H1 (cell line): ENCODE measurements at regions of chr2 and their contacts with region 1.

Region 1: DNA sequence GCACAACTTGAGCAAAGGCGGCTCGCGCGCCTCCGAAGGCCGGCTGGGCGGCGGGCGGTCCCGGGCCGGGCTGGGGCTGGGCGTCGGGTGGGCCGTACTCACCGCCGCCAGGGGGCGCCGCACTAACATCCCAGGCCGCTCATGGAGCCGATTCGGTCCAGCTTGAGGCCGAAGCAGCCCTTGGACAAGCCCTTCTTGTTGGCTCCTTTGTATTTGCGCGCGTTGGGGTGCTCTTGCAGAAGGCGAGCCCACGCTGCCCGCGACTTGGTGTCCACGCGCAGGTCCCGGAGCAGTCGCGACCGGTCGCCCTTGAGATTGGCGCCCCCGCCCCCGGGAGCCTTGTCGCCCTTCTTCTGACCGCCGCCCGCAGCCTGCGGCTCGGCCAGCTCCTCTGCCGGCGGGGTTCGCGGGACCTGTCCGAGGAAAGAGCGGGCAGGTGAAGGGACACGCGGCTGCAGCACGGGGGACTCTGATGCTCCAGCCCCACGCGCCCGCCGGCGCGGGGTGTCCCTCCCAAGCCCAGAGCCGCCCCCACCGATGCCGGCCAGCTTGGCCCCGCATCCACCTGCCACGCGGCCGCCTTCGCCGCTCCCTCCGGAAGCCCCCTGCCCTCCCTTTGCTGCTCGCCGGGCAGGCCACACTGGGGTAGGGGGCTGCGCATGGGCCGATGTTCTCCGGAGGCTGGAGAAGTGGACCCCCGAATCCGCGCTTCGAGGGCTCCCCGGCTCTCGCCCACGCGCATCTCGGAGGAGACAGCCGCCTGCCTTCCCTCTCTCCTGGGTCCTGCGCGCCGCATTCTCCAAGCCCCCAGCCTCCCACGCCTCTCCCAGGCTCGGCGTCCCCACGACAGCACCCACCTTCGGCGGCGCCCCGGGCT is 655 bp downstream of the NPPC start:
- DNase-seq: peak; percentile 59 to 93
- H3K4me3 ChIP-seq: peak overlapping the region; percentile 52 to 75 (median 66)
- H3K27ac ChIP-seq: no peak overlapping the region
- H3K4me1 ChIP-seq: peaks cover 3 to 20% (median 14%) of the 10 kb centered on the region in 4 experiments
- H3K27me3 ChIP-seq: peaks cover 24 to 55% (median 43%) of the 10 kb centered on the region in 4 experiments
- CTCF ChIP-seq: peak in 2 of 3 experiments; percentile 80 to 89; a peak in 3 of 4 replicates
- EP300 ChIP-seq: no peak
- POLR2A ChIP-seq: no peak
- RAD21 ChIP-seq: peak; percentile 56 to 73

Region 2: GRCh38 chr2:231696007-231696371 is 229.6 kb before region 1 on chr2:
- CTCF ChIA-PET with region 1: no interaction called
- POLR2A ChIA-PET with region 1: no interaction called
- DNase-seq: no peak
- H3K4me3 ChIP-seq: no peak overlapping the region
- H3K27ac ChIP-seq: no peak overlapping the region
- H3K4me1 ChIP-seq: peaks cover 0 to 3% (median 1%) of the 10 kb centered on the region in 4 experiments; a peak in 1 of 7 replicates
- H3K27me3 ChIP-seq: no peaks in the 10 kb centered on the region
- CTCF ChIP-seq: no peak
- EP300 ChIP-seq: no peak
- POLR2A ChIP-seq: no peak
- RAD21 ChIP-seq: no peak

Region 3: DNA sequence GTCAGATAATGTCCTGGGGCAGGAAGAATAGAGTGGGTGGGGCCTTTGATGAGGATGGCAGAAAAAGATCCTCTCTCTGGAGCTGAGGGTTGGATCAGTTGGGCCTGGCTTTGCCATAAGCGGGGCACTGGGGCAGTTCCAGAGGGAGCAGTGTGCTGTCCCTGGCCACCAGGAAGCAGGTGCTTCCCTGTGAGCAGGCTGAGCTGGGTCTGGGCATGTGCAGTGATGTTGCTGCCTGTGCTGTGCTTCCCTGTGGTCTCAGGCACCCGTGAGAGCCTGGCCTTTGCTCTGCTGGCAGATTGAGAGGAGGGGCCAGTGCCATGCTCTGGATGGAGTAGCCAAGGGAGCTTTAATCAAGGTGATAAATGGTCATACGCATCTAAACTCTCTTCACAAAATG is 15.3 kb after region 1 on chr2:
- CTCF ChIA-PET with region 1: interaction called, 24 read pairs
- POLR2A ChIA-PET with region 1: interaction called, 10 read pairs
- DNase-seq: no peak
- H3K4me3 ChIP-seq: no peak overlapping the region
- H3K27ac ChIP-seq: no peak overlapping the region
- H3K4me1 ChIP-seq: no peaks in the 10 kb centered on the region
- H3K27me3 ChIP-seq: no peaks in the 10 kb centered on the region
- CTCF ChIP-seq: no peak
- EP300 ChIP-seq: no peak
- POLR2A ChIP-seq: no peak
- RAD21 ChIP-seq: no peak

Region 4: DNA sequence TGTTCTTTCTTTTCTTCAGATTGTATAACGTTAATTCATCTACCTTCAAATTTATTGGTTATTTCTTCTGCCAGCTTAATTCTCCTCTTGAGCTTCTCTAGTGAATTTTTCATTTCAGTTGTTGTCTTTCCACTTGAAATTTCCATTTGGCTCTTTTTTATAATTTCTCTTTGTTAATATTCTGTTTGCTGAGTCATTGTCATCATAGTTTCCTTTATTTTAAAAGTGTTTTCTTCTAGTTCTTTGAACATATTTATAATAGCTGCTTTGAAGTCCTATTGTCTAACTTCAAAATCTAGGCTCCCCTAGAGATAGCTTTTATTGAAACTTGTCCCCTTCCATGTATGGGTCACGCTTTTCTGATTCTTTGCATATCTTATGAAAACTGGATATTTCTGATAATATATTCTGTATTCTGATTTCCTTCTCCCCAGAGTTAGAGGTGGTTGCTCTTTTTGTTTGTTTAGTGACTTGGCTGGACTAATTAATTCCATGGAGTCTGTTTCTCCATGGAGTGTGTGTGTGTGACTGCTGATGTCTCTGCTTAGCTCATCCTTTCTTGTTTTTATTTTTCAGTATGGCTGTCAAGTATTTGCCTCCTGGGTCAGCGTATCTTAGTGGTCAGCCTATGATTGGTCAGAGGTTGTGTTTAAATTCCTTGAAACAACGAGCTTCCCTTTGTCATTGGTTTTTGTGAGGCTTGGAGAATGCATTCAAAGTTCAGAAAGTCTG is 83.5 kb after region 1 on chr2:
- CTCF ChIA-PET with region 1: interaction called, 11 read pairs
- POLR2A ChIA-PET with region 1: no interaction called
- DNase-seq: no peak
- H3K4me3 ChIP-seq: no peak overlapping the region
- H3K27ac ChIP-seq: no peak overlapping the region
- H3K4me1 ChIP-seq: peaks cover 0 to 8% (median under 1%) of the 10 kb centered on the region in 4 experiments; a peak in 2 of 7 replicates
- H3K27me3 ChIP-seq: no peaks in the 10 kb centered on the region
- CTCF ChIP-seq: no peak
- EP300 ChIP-seq: no peak
- POLR2A ChIP-seq: no peak
- RAD21 ChIP-seq: no peak

Region 5: GRCh38 chr2:232120911-232121310 is 195.4 kb after region 1 on chr2:
- CTCF ChIA-PET with region 1: interaction called, 12 read pairs
- POLR2A ChIA-PET with region 1: no interaction called
- DNase-seq: no peak
- H3K4me3 ChIP-seq: no peak overlapping the region
- H3K27ac ChIP-seq: no peak overlapping the region
- H3K4me1 ChIP-seq: 0 out of 7 replicates have a peak, but pooled peaks cover 0 to 2% (median 0%) of the 10 kb centered on the region in 4 experiments
- H3K27me3 ChIP-seq: no peaks in the 10 kb centered on the region
- CTCF ChIP-seq: no peak
- EP300 ChIP-seq: no peak
- POLR2A ChIP-seq: no peak
- RAD21 ChIP-seq: no peak

Region 6: DNA sequence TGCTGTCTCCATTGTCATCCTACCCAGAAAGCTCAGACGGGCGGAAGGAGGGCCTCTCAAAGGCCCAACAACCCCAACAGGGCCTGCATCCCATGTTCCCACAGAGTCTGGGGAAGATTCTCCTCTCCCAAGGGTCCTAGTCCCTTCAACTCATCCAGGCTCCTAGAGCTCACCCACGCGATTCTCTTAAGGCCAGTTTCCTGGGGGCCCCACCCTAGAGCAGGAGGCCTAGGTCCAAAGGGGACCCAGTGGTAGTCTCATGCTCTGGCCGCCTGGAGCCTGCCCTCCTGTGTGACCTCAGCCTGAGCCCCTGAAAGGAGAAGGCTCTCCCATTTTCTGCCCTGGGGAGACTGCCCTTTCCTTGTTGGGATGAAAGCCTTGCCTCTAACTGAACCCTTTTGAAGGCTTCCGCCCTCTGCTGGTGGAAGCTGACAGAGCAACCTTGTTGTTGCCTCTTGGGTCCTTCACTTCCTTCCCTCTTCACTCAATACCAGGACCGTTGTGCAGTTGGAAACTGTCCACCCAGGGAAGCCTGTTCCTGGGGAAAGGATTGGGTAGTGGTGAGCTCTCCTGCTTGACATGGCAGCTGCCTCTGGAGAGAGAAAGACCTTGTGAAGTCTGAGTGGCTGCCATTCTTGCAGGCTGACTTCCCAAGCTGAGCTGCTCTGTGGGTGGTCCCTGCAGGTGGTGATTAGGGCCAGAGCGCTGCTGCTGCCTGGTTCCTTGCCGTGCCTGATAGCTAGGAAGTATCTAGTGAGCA is 367.0 kb after region 1 on chr2:
- CTCF ChIA-PET with region 1: interaction called, 10 read pairs
- POLR2A ChIA-PET with region 1: no interaction called
- DNase-seq: peak; percentile 46 to 89
- H3K4me3 ChIP-seq: no peak overlapping the region
- H3K27ac ChIP-seq: no peak overlapping the region
- H3K4me1 ChIP-seq: peaks cover 2 to 5% (median 3%) of the 10 kb centered on the region in 4 experiments; a peak in 5 of 7 replicates
- H3K27me3 ChIP-seq: no peaks in the 10 kb centered on the region
- CTCF ChIP-seq: peak; percentile 72 to 95 (median 77)
- EP300 ChIP-seq: no peak
- POLR2A ChIP-seq: no peak
- RAD21 ChIP-seq: peak; percentile 59 to 72